ENCODE measurements at regions of chr5 and their contacts with region 1.

Region 1: DNA sequence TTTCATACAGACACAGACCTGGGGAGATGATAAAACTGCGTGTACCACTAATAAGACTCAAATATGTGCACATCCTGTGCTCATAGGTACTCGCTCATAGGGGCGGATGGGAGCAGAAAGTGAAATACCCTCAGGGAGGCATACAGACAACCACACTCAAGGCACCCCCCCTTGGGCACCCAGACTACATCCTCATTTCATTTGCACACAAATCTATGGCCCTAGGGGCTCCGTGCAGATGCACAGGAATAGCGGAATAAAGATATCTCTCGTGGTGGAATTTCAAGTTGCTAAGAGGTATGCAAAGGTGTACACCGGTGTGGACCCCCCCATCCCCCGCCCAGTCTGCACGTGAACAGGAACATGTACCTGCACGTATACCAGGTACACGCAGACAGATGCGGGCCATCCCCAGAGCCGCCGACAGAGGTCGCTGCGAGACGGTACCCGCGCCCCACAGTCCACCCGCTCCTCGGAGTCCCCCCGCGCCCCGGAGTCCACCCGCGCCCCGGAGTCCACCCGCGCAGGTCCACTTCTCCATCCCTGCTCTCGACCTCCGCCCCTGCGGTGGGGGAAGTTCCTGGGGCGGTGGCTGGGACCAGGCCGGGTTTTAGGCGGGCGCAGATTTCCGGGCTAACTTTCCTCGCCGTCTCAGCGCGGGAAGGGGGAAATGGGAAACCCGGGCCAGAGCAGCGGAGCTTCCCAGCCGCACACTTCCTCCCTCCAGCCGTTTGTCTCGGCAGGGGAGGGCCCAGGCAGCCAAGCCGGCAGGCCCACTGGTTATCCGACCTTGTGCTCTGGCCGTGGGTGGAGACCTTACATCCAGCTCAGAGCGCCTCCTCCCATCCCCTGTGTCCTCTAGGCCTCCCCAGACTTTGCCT is 1.0 kb upstream of the IL12B start:
- DNase-seq: no peak
- ATAC-seq: peak; percentile 83
- H3K4me3 ChIP-seq: peak overlapping the region; percentile 54
- H3K27ac ChIP-seq: no peak overlapping the region
- H3K4me1 ChIP-seq: peaks cover 10% of the 10 kb centered on the region
- H3K27me3 ChIP-seq: 0 out of 4 replicates have a peak, but pooled peaks cover 0 to 3% of the 10 kb centered on the region in 2 experiments
- CTCF ChIP-seq: peak; percentile 63 to 93 (median 76)
- EP300 ChIP-seq: no peak
- POLR2A ChIP-seq: no peak
- RAD21 ChIP-seq: peak; percentile 56

Region 2: GRCh38 chr5:159316519-159317383 is 14.6 kb before region 1 on chr5:
- CTCF ChIA-PET with region 1: interaction called, 20 read pairs
- POLR2A ChIA-PET with region 1: no interaction called
- RAD21 ChIA-PET with region 1: interaction called, 3 read pairs
- SMC1A ChIA-PET with region 1: interaction called, 14 read pairs
- in situ Hi-C with region 1: no loop called
- intact Hi-C with region 1: no loop called
- DNase-seq: no peak
- ATAC-seq: peak; percentile 98
- H3K4me3 ChIP-seq: no peak overlapping the region
- H3K27ac ChIP-seq: no peak overlapping the region
- H3K4me1 ChIP-seq: no peaks in the 10 kb centered on the region
- H3K27me3 ChIP-seq: no peaks in the 10 kb centered on the region
- CTCF ChIP-seq: peak; percentile 73 to 77 (median 76)
- EP300 ChIP-seq: no peak
- POLR2A ChIP-seq: no peak
- RAD21 ChIP-seq: peak; percentile 75

Region 3: GRCh38 chr5:159405611-159406031 is 74.3 kb after region 1 on chr5:
- CTCF ChIA-PET with region 1: interaction called, 15 read pairs
- POLR2A ChIA-PET with region 1: interaction called, 5 read pairs
- RAD21 ChIA-PET with region 1: interaction called, 26 read pairs
- SMC1A ChIA-PET with region 1: interaction called, 8 read pairs
- in situ Hi-C with region 1: no loop called
- intact Hi-C with region 1: loop called (anchors 2 kb)
- DNase-seq: peak; percentile 58
- ATAC-seq: peak; percentile 83
- H3K4me3 ChIP-seq: no peak overlapping the region
- H3K27ac ChIP-seq: no peak overlapping the region
- H3K4me1 ChIP-seq: peaks cover 17% of the 10 kb centered on the region
- H3K27me3 ChIP-seq: no peaks in the 10 kb centered on the region; a peak in 1 of 4 replicates
- CTCF ChIP-seq: no peak
- EP300 ChIP-seq: peak in 1 of 2 experiments; percentile 81; a peak in 1 of 4 replicates
- POLR2A ChIP-seq: no peak
- RAD21 ChIP-seq: no peak

Region 4: GRCh38 chr5:159427180-159428012 is 96.1 kb after region 1 on chr5:
- CTCF ChIA-PET with region 1: interaction called, 32 read pairs
- POLR2A ChIA-PET with region 1: interaction called, 5 read pairs
- RAD21 ChIA-PET with region 1: interaction called, 22 read pairs
- SMC1A ChIA-PET with region 1: interaction called, 74 read pairs
- in situ Hi-C with region 1: no loop called
- intact Hi-C with region 1: loop called (anchors 5 kb)
- DNase-seq: peak; percentile 73
- ATAC-seq: peak; percentile 79
- H3K4me3 ChIP-seq: peak overlapping the region; percentile 38; the same call in 1 of the 2 replicates
- H3K27ac ChIP-seq: peak overlapping the region; percentile 10; the same call in 1 of the 2 replicates
- H3K4me1 ChIP-seq: peaks cover 48% of the 10 kb centered on the region
- H3K27me3 ChIP-seq: no peaks in the 10 kb centered on the region
- CTCF ChIP-seq: no peak
- EP300 ChIP-seq: peak; percentile 68 to 82; a peak in 3 of 4 replicates
- POLR2A ChIP-seq: no peak
- RAD21 ChIP-seq: 0 out of 2 replicates have a peak, but pooled peaks have one; percentile 8

Region 5: DNA sequence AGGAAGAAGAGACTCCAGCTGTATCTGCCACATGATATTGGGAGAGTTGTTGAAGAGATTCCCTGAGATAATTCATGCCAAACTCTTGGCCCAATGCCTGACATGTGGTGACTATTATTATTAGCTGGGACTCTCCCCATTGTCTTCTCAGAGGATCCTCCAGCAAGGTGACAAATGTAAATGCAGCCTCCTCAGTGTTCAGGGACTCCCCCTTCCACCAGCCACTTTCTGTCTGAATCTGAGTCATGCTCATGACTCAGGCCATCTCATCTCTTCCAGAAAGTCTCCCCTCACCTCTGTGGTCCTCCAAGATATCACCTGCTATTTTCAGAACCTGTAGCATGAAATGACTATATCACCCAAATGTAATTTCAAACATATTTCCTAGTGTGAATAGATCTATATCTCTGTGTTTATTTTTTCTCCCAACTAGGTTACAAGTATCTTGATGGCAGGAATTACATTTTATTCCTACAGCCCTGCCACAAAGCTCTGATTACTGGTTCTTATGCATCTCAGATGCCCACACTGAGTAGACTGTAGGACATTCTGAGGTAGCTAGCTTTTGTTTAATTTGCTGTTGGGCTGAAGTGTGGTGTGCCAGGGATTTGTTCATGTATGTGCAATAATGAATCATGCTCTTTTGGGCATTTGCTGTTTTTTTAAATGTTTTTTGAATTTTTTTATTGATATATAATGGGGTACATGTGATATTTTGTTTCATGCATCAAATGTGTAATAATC is 125.6 kb after region 1 on chr5:
- CTCF ChIA-PET with region 1: interaction called, 15 read pairs
- POLR2A ChIA-PET with region 1: interaction called, 3 read pairs
- RAD21 ChIA-PET with region 1: interaction called, 38 read pairs
- SMC1A ChIA-PET with region 1: interaction called, 37 read pairs
- in situ Hi-C with region 1: no loop called
- intact Hi-C with region 1: loop called (anchors 1 kb)
- DNase-seq: peak; percentile 96
- ATAC-seq: peak; percentile 70
- H3K4me3 ChIP-seq: peak overlapping the region; percentile 14; the same call in 1 of the 2 replicates
- H3K27ac ChIP-seq: peak overlapping the region; percentile 41
- H3K4me1 ChIP-seq: peaks cover 58% of the 10 kb centered on the region
- H3K27me3 ChIP-seq: no peaks in the 10 kb centered on the region
- CTCF ChIP-seq: no peak
- EP300 ChIP-seq: peak; percentile 97
- POLR2A ChIP-seq: no peak
- RAD21 ChIP-seq: no peak

Region 6: DNA sequence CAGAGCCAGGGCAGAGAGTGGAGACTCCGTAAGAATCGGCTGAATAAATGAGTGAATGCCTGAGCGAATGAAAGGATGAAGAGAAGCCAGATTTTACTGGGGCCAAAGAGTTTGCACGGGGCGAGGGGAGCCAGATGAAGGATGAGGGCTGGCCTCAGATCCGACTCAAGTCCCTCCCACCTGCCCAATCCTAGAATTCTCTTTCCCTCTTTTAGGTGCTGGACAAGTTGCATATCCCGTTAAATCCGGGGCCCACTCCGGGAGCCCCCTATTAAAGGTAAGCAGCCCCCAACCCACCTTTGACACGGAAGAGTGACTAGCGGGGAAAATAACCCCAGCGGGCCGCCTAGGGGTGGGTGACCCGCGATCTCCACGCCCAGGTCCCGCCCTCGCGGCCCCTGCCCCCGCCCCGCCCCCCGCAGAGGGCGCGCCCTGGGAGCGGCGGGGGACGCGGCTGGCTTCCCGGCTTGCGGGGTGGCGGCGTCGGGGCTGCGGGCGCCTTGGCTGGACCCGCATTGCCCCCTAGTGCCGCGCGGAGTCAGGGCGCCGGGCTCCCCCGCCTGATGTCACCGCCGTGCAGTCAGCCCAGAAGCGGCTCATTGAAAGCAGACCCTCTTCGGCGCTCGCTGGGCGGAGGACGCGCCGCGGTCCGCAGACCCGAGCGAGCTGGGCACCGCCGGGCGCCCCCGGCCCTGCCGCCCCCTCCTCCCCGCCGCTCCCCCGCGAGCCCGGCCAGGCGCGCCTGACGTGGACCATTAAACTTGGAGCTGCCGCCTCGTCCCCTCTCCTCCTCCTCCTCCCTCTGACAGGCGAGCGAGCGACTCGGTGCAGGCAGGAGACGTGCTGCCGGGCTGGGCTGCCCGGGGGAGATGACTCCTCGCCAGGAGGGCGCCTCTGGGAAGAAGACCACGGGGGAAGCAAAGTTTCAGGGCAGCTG is 584.8 kb after region 1 on chr5 and contains the start of gene ADRA1B:
- CTCF ChIA-PET with region 1: interaction called, 3 read pairs
- POLR2A ChIA-PET with region 1: no interaction called
- RAD21 ChIA-PET with region 1: interaction called, 3 read pairs
- SMC1A ChIA-PET with region 1: interaction called, 3 read pairs
- in situ Hi-C with region 1: no loop called
- intact Hi-C with region 1: loop called (anchors 10 kb)
- DNase-seq: no peak
- ATAC-seq: peak; percentile 97
- H3K4me3 ChIP-seq: no peak within 1 kb of the TSS
- H3K27ac ChIP-seq: no peak within 1 kb of the TSS
- H3K4me1 ChIP-seq: no peaks in the 10 kb centered on the region
- H3K27me3 ChIP-seq: peaks cover 6 to 10% of the 10 kb centered on the region in 2 experiments
- CTCF ChIP-seq: peak; percentile 28 to 66 (median 49); a peak in 4 of 6 replicates
- EP300 ChIP-seq: no peak
- POLR2A ChIP-seq: no peak
- RAD21 ChIP-seq: peak; percentile 37
- polyA plus RNA-seq, gene ADRA1B: not detected

Measured in GM12878 (cell line).